ENCODE measurements at regions of chr5 and their contacts with region 1.

Region 1: GRCh38 chr5:66306105-66306843 is 162.2 kb downstream of the SREK1 start:
- DNase-seq: peak; percentile 79
- H3K4me3 Mint-ChIP-seq: no peak overlapping the region
- H3K27ac Mint-ChIP-seq: no peak overlapping the region
- H3K4me1 Mint-ChIP-seq: no peaks in the 10 kb centered on the region
- H3K27me3 Mint-ChIP-seq: peaks cover 45% of the 10 kb centered on the region
- CTCF ChIP-seq: peak; percentile 87

Region 2: DNA sequence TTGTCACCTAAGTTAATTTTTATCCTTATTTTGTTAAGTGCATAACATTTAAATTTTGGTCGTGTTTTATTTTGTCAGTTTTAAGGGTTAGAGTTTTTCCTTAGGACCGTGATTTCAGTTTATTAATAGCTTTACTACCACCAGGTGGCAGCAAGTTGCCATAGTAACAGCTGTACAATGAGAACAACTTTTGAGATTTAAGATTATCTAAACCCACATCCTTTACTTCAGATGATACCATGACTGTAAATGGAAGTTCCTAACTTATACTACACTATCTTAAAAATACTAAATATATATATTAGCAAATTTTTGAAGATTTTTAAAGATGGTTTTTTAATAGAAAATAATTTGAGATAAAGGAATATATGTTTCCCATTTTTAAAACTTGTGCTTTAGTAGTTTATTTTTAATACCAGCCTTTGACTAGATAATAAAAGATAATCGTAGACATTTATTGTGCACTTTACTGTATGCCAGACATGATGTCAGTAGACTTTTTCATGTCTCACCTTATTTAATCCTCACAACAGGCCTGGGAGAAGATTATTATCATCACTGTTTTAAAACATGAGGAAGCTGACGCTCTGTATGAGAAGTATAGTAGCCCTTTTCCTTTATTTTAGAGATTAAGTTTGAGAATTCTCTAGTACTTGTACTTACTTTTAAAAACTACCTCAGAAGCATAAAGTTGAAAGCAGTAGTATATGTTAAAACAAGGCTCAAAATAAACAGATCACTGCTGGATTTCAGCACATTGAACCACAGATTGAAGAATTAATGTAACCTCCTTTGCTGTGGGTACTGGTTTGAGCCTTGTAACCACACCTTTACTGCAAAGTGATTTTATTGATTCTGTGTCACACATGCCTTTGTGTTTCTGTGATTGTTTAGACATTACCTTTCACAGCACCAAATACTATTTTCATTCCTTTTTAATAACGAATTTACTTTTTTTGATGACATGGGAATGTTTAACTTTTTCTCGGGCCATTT is 134.6 kb before region 1 on chr5:
- CTCF ChIA-PET with region 1: interaction called, 17 read pairs
- POLR2A ChIA-PET with region 1: no interaction called
- intact Hi-C with region 1: loop called (anchors 1 kb)
- DNase-seq: peak; percentile 49
- H3K4me3 Mint-ChIP-seq: no peak overlapping the region
- H3K27ac Mint-ChIP-seq: peak overlapping the region; percentile 6
- H3K4me1 Mint-ChIP-seq: peaks cover 13% of the 10 kb centered on the region
- H3K27me3 Mint-ChIP-seq: no peaks in the 10 kb centered on the region
- CTCF ChIP-seq: peak; percentile 43

Region 3: GRCh38 chr5:66324357-66324756 is 18.1 kb after region 1 on chr5:
- CTCF ChIA-PET with region 1: interaction called, 89 read pairs
- POLR2A ChIA-PET with region 1: no interaction called
- intact Hi-C with region 1: no loop called
- DNase-seq: no peak
- H3K4me3 Mint-ChIP-seq: no peak overlapping the region
- H3K27ac Mint-ChIP-seq: no peak overlapping the region
- H3K4me1 Mint-ChIP-seq: no peaks in the 10 kb centered on the region
- H3K27me3 Mint-ChIP-seq: peaks cover 59% of the 10 kb centered on the region
- CTCF ChIP-seq: no peak

Region 4: DNA sequence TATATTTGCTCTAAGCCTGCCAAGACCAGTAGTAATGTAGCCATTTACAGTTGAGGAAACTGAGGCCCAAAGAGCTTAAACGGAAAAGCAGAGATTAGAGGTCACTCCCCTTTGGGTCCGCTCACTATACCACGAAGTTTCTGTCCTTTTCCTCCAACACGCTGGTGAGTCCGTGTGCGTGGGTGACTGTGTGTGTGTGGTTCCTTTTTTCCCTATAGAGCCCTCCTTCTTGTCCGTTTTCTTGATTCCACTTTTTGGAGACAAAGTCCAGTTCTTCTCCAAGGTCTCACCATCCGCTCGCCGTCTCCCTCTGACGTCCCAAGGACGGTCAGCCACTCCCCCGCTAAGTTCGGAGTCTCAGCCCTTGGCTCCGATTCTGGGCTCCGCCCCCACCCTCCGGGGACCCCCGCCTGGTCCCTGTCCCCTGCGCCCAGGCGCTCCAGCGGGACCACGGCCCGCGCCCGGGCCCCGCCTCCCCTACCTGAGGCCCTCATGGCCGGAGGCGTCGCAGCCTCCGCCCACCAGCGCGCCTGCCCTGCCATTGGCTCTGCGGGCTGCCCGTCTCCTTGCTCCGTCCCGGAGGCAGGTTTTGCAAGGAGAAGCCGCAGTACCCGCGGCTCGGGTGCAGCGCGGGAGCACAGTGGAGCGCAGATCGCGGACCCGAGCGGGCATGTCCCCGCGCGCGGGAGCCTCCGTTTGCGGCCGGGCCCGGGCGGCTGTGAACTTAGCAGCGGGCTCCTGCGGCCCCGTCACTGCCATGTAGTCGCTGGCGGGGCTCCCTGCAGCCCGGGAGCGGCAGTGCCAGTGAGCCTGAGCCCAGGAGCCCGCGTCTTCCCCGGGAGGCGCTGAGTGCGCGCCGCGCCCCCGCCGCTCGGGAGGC is 289.7 kb after region 1 on chr5 and contains the start of gene MAST4:
- CTCF ChIA-PET with region 1: interaction called, 10 read pairs
- POLR2A ChIA-PET with region 1: no interaction called
- intact Hi-C with region 1: loop called (anchors 5 kb)
- DNase-seq: peak; percentile 83
- H3K4me3 Mint-ChIP-seq: peak within 1 kb of the TSS; percentile 84
- H3K27ac Mint-ChIP-seq: no peak within 1 kb of the TSS
- H3K4me1 Mint-ChIP-seq: peaks cover 16% of the 10 kb centered on the region
- H3K27me3 Mint-ChIP-seq: peaks cover 80% of the 10 kb centered on the region
- CTCF ChIP-seq: no peak
- total RNA-seq, gene MAST4: 26.5 and 26.8 TPM in 2 replicates

Region 5: DNA sequence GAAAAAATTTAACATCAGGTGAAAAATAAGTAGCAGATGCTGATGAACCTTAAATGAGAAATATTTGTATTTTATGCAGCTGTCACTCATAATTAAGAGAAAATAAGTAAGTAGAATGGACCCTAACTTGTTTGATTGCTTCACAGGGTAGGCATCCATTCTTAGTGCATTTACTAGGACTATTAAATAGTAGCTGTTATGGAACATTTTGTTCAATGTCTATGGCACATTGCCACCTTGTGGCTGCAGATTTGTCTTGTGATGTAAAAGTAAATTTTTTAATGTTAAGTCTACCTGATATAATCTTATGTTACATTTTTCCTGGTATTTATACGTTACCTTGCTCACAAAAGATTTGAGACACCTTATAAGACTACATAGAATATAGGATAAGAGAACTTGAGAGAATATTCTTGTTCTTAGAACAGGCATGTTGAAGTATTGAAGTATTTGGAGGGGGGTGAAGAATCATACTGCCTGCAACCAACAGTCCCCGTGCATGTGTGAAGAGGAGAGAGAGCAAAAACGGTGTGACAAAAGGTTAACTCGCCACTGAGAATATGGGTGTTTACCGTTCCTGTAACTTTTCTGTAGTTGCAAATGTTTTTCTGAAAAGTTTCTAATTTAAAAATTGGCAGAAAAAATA is 451.0 kb after region 1 on chr5:
- CTCF ChIA-PET with region 1: interaction called, 167 read pairs
- POLR2A ChIA-PET with region 1: interaction called, 13 read pairs
- intact Hi-C with region 1: loop called (anchors 1 kb)
- DNase-seq: peak; percentile 68
- H3K4me3 Mint-ChIP-seq: no peak overlapping the region
- H3K27ac Mint-ChIP-seq: no peak overlapping the region
- H3K4me1 Mint-ChIP-seq: no peaks in the 10 kb centered on the region
- H3K27me3 Mint-ChIP-seq: peaks cover 69% of the 10 kb centered on the region
- CTCF ChIP-seq: peak; percentile 49

Region 6: DNA sequence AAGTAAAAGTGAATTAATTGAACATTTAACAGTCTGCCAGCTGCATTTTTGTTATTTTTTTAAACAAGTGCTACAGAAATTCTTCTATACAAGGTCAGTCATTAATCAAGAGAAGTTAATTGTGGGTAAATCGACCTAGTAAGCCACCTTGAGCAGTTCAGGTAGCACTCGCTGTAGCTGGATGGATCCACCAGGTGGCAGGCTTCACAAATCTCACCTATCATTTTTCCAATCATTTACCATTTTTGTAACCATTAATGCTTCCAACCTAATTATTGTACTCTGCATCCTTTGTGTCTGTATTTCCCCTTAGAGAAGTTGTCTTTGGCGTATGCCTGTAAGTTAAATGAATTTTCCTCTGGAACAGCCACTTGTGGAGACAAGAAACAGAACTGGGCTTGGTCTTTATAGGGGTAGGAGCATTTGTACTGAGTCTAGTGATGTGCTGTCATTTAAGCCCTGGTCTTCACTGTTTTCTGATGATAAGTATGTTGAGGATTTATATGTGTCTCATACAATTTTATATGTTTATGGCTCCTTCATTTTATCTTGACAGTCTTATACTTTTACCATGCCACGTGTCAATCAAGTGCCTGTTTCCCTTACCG is 850.8 kb after region 1 on chr5:
- CTCF ChIA-PET with region 1: interaction called, 4 read pairs
- POLR2A ChIA-PET with region 1: no interaction called
- intact Hi-C with region 1: loop called (anchors 10 kb)
- DNase-seq: peak; percentile 52
- H3K4me3 Mint-ChIP-seq: no peak overlapping the region
- H3K27ac Mint-ChIP-seq: no peak overlapping the region
- H3K4me1 Mint-ChIP-seq: peaks cover 18% of the 10 kb centered on the region
- H3K27me3 Mint-ChIP-seq: no peaks in the 10 kb centered on the region
- CTCF ChIP-seq: peak; percentile 81